ENCODE measurements at regions of chr4 and their contacts with region 1.

Region 1: GRCh38 chr4:98995183-98996055 is at the start of gene METAP1:
- DNase-seq: peak; percentile 79
- ATAC-seq: peak; percentile 90
- H3K4me3 ChIP-seq: peak within 1 kb of the TSS; percentile 94
- H3K27ac ChIP-seq: peak within 1 kb of the TSS; percentile 74
- H3K4me1 ChIP-seq: no peaks in the 10 kb centered on the region
- H3K27me3 ChIP-seq: no peaks in the 10 kb centered on the region
- CTCF ChIP-seq: peak; percentile 67 to 85 (median 72)
- EP300 ChIP-seq: no peak
- POLR2A ChIP-seq: peak; percentile 96
- RAD21 ChIP-seq: peak; percentile 80
- polyA plus RNA-seq, gene METAP1: 22.7 to 32.4 TPM

Region 2: GRCh38 chr4:98658287-98659105 is 336.9 kb before region 1 on chr4 and contains the start of gene TSPAN5:
- CTCF ChIA-PET with region 1: no interaction called
- POLR2A ChIA-PET with region 1: no interaction called
- RAD21 ChIA-PET with region 1: interaction called, 3 read pairs
- SMC1A ChIA-PET with region 1: interaction called, 4 read pairs
- in situ Hi-C with region 1: no loop called
- intact Hi-C with region 1: loop called (anchors 10 kb)
- DNase-seq: no peak
- ATAC-seq: peak; percentile 84
- H3K4me3 ChIP-seq: peak within 1 kb of the TSS; percentile 65
- H3K27ac ChIP-seq: no peak within 1 kb of the TSS
- H3K4me1 ChIP-seq: peaks cover 10% of the 10 kb centered on the region
- H3K27me3 ChIP-seq: peaks cover 4 to 23% of the 10 kb centered on the region in 2 experiments
- CTCF ChIP-seq: no peak
- EP300 ChIP-seq: no peak
- POLR2A ChIP-seq: peak; percentile 33; the same call in 1 of the 2 replicates
- RAD21 ChIP-seq: no peak
- polyA plus RNA-seq, gene TSPAN5: 0.22 to 0.23 TPM

Region 3: GRCh38 chr4:98771959-98772632 is 223.3 kb before region 1 on chr4:
- CTCF ChIA-PET with region 1: no interaction called
- POLR2A ChIA-PET with region 1: no interaction called
- RAD21 ChIA-PET with region 1: no interaction called
- SMC1A ChIA-PET with region 1: no interaction called
- in situ Hi-C with region 1: no loop called
- intact Hi-C with region 1: no loop called
- DNase-seq: no peak
- ATAC-seq: no peak
- H3K4me3 ChIP-seq: no peak overlapping the region
- H3K27ac ChIP-seq: no peak overlapping the region
- H3K4me1 ChIP-seq: no peaks in the 10 kb centered on the region
- H3K27me3 ChIP-seq: no peaks in the 10 kb centered on the region
- CTCF ChIP-seq: no peak
- EP300 ChIP-seq: no peak
- POLR2A ChIP-seq: no peak
- RAD21 ChIP-seq: no peak

Region 4: DNA sequence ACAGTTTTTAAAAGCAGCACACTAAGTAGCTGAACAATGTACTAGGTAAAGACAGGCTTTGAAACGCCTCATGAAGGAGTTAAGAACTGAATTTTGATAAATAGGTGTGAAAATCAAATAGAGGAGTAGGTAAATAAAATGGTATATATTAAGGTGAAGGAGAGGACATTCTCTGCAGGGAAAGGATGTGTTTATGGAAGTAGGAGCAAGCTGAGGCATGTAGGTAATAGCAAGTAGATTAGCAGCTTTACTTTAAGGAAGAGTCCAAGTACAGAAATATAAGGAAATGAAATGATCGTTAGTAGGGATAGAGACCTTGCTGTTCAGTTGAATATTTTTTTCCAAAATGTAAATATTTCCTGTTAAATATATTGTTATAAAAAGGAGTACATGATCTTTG is 12.6 kb after region 1 on chr4:
- CTCF ChIA-PET with region 1: interaction called, 19 read pairs
- POLR2A ChIA-PET with region 1: no interaction called
- RAD21 ChIA-PET with region 1: interaction called, 8 read pairs
- SMC1A ChIA-PET with region 1: interaction called, 13 read pairs
- in situ Hi-C with region 1: no loop called
- intact Hi-C with region 1: no loop called
- DNase-seq: no peak
- ATAC-seq: no peak
- H3K4me3 ChIP-seq: no peak overlapping the region
- H3K27ac ChIP-seq: no peak overlapping the region
- H3K4me1 ChIP-seq: no peaks in the 10 kb centered on the region
- H3K27me3 ChIP-seq: no peaks in the 10 kb centered on the region
- CTCF ChIP-seq: no peak
- EP300 ChIP-seq: no peak
- POLR2A ChIP-seq: no peak
- RAD21 ChIP-seq: no peak

Region 5: GRCh38 chr4:99061048-99061700 is 65.8 kb after region 1 on chr4:
- CTCF ChIA-PET with region 1: interaction called, 287 read pairs
- POLR2A ChIA-PET with region 1: interaction called, 6 read pairs
- RAD21 ChIA-PET with region 1: interaction called, 103 read pairs
- SMC1A ChIA-PET with region 1: interaction called, 166 read pairs
- in situ Hi-C with region 1: no loop called
- intact Hi-C with region 1: loop called (anchors 1 kb)
- DNase-seq: no peak
- ATAC-seq: no peak
- H3K4me3 ChIP-seq: no peak overlapping the region
- H3K27ac ChIP-seq: no peak overlapping the region
- H3K4me1 ChIP-seq: peaks cover 6% of the 10 kb centered on the region; the same call in 1 of the 2 replicates
- H3K27me3 ChIP-seq: no peaks in the 10 kb centered on the region
- CTCF ChIP-seq: no peak
- EP300 ChIP-seq: no peak
- POLR2A ChIP-seq: no peak
- RAD21 ChIP-seq: no peak

Region 6: GRCh38 chr4:99462875-99463464 is 467.6 kb after region 1 on chr4:
- CTCF ChIA-PET with region 1: interaction called, 17 read pairs
- POLR2A ChIA-PET with region 1: no interaction called
- RAD21 ChIA-PET with region 1: interaction called, 3 read pairs
- SMC1A ChIA-PET with region 1: interaction called, 9 read pairs
- in situ Hi-C with region 1: no loop called
- intact Hi-C with region 1: loop called (anchors 5 kb)
- DNase-seq: peak; percentile 24
- ATAC-seq: peak; percentile 99
- H3K4me3 ChIP-seq: no peak overlapping the region
- H3K27ac ChIP-seq: no peak overlapping the region
- H3K4me1 ChIP-seq: no peaks in the 10 kb centered on the region
- H3K27me3 ChIP-seq: no peaks in the 10 kb centered on the region
- CTCF ChIP-seq: peak; percentile 67 to 89 (median 75); a peak in 5 of 6 replicates
- EP300 ChIP-seq: no peak
- POLR2A ChIP-seq: no peak
- RAD21 ChIP-seq: peak; percentile 96

Measured in GM12878 (cell line).